ENCODE measurements at regions of chr1 and their contacts with region 1.

Region 1: DNA sequence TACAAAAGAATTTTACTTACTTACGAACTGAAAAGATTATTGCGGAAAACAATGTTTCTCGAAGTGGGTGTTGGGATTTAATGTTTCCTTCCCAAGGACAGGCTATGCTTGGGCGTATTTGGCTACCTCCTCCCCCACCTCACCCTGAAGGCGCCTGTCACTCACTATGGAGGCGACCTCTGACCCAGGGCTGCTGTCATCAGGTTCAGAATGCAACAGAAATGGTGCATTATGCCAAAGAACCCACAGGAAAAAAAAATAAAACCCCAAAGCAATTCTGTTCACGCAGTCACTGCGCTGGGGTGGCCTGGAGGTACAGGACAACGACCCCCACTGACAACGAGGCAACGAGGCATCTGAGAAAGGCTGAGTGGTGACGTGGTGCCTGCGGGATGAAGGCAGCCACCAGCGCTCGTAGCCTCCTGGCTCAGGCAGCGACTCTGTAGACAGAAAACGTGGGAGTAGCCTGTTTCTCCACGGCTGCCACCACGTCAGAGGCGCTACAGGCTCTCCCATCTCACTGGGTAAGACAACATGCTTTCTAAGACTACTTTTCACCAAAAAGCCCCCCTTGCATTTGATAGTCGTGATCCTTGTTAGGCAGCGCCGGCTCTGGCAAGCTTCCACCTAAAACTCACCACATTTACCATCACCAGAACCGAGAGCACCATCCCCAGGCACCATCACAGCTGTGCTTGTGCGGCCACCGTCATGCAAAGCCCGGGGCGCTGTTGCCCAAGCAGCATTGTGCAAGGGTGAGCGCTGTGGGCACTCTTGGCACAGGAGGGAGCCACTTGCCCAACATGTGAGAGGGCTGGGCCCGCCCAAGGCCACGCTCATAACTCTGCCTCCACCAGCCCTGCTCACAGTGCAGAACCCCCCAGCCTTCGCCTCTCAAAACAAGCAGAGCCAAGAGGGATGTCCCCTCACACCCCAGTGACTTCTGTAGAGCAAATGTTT is 14.3 kb downstream of the NADK start:
- DNase-seq: peak; percentile 17 to 53 (median 50)
- H3K4me3 ChIP-seq: no peak overlapping the region
- H3K27ac ChIP-seq: no peak overlapping the region
- H3K4me1 ChIP-seq: peaks cover 0 to 3% (median 1%) of the 10 kb centered on the region in 4 experiments
- H3K27me3 ChIP-seq: no peaks in the 10 kb centered on the region

Region 2: GRCh38 chr1:1777950-1778662 is 14.2 kb after region 1 on chr1 and contains the start of gene NADK:
- CTCF ChIA-PET with region 1: interaction called, 18 read pairs
- POLR2A ChIA-PET with region 1: interaction called, 6 read pairs
- DNase-seq: peak; percentile 46 to 65 (median 63)
- H3K4me3 ChIP-seq: peak within 1 kb of the TSS; percentile 67 to 88 (median 84)
- H3K27ac ChIP-seq: peak within 1 kb of the TSS; percentile 46 to 79
- H3K4me1 ChIP-seq: peaks cover 16 to 84% (median 70%) of the 10 kb centered on the region in 4 experiments
- H3K27me3 ChIP-seq: no peaks in the 10 kb centered on the region

Measured in common myeloid progenitor, CD34-positive (primary cell).